ENCODE measurements at regions of chr3 and their contacts with region 1.

Region 1: GRCh38 chr3:138915503-138916498 is 31.1 kb downstream of the FOXL2 start:
- DNase-seq: peak; percentile 88
- H3K4me3 Mint-ChIP-seq: peak overlapping the region; percentile 78
- H3K27ac Mint-ChIP-seq: no peak overlapping the region
- H3K4me1 Mint-ChIP-seq: peaks cover 5% of the 10 kb centered on the region
- H3K27me3 Mint-ChIP-seq: no peaks in the 10 kb centered on the region

Region 2: DNA sequence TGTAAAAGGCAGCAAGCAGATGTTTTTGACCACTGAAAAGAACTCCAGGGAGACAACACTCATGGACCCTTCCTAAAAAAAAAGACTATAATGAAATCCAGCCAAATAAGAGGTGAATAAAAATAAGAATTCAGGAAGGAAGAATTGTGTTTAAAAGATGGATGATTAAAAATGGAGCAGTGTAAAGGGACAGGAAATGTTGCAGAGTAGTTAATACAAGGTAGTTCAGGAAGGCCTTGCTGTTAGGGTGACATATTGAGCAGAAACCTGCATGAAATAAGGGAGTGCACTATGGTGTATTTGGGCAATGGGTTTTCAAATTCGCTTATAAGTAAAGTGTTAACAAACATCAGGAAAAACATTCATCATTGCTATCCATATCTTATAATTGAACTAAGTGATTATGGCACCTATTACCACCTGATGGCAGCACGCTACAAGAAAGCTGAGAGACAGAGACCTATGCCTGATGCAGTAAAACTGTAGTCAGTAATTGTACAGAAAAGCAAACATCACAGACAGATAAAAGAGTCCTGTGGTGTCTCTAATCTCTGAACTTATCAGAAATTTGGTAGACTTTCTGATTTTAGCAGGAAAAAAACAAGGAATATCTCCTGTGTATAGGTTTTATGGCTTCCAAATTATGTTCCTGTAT is 735.3 kb before region 1 on chr3:
- CTCF ChIA-PET with region 1: interaction called, 13 read pairs
- POLR2A ChIA-PET with region 1: no interaction called
- intact Hi-C with region 1: loop called (anchors 5 kb)
- DNase-seq: peak; percentile 49
- H3K4me3 Mint-ChIP-seq: no peak overlapping the region
- H3K27ac Mint-ChIP-seq: no peak overlapping the region
- H3K4me1 Mint-ChIP-seq: peaks cover 5% of the 10 kb centered on the region
- H3K27me3 Mint-ChIP-seq: peaks cover 6% of the 10 kb centered on the region

Region 3: DNA sequence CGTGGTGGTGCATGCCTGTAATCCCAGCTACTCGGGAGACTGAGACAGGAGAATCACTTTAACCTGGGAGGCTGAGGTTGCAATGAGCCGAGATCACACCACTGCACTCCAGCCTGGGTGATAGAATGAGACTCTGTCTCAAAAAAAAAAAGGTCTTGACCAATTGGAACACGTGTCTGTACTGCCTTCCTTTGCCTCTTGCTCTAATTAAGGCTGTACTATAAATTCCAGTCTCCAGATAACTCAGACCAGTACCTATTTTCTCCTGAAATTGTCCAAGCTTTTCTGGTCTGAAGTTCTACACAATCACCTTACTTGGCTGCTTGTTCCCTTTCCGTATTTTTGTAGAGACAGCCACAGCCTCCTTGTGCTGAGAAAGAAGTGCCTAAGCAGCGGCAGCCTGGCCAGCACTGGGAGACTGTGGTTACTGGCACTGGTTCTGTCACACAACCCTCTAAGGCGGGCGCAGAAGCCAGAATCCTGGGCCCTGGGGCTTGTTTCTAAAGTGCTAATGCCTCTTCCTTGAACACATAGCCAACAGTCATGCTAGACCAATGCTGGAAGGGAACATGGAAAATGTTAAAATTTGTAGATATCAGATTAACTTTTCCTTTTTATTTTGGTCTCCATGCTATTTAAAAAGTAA is 315.6 kb before region 1 on chr3:
- CTCF ChIA-PET with region 1: interaction called, 232 read pairs
- POLR2A ChIA-PET with region 1: interaction called, 7 read pairs
- intact Hi-C with region 1: no loop called
- DNase-seq: no peak
- H3K4me3 Mint-ChIP-seq: no peak overlapping the region
- H3K27ac Mint-ChIP-seq: no peak overlapping the region
- H3K4me1 Mint-ChIP-seq: no peaks in the 10 kb centered on the region
- H3K27me3 Mint-ChIP-seq: no peaks in the 10 kb centered on the region

Region 4: DNA sequence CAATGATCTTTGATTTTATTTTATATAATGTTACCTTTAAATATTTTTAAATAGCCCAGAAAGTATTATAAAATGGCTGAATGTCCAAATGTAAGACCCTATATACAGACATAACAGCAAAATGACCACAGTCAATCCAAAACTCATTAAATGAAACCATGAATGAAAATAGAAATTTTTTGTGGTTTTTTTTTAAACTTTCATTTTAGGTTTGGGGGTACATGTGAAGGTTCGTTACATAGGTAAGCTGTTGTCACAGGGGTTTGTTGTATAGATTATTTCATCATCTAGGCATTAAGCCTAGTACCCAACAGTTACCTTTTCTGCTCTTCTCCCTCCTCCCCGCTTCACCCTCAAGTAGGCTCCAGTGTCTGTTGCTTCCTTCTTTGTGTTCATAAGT is 198.5 kb before region 1 on chr3:
- CTCF ChIA-PET with region 1: interaction called, 32 read pairs
- POLR2A ChIA-PET with region 1: no interaction called
- intact Hi-C with region 1: no loop called
- DNase-seq: no peak
- H3K4me3 Mint-ChIP-seq: no peak overlapping the region
- H3K27ac Mint-ChIP-seq: no peak overlapping the region
- H3K4me1 Mint-ChIP-seq: peaks cover 12% of the 10 kb centered on the region
- H3K27me3 Mint-ChIP-seq: no peaks in the 10 kb centered on the region

Region 5: DNA sequence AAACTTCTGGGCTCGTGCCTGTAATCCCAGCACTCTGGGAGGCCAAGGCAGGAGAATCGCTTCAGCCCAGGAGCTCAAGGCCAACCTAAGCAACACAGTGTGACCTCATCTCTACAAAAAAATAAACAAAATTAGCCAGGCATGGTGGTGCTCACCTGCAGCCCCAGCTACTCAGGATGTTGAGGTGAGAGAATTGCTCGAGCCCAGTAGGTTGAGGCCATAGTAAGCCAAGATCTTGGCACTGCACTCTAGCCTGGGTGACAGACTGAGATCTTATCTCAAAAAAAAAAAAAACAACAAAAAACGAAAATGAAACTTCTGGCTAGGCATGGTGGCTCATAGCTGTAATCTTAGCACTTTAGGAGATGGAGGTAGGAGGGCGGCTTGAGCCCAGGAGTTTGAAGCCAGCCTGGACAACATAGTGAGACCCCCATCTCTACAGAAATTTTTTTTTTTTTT is 134.8 kb before region 1 on chr3:
- CTCF ChIA-PET with region 1: interaction called, 14 read pairs
- POLR2A ChIA-PET with region 1: no interaction called
- intact Hi-C with region 1: no loop called
- DNase-seq: peak; percentile 58
- H3K4me3 Mint-ChIP-seq: no peak overlapping the region
- H3K27ac Mint-ChIP-seq: peak overlapping the region; percentile 28
- H3K4me1 Mint-ChIP-seq: peaks cover 25% of the 10 kb centered on the region
- H3K27me3 Mint-ChIP-seq: no peaks in the 10 kb centered on the region

Region 6: DNA sequence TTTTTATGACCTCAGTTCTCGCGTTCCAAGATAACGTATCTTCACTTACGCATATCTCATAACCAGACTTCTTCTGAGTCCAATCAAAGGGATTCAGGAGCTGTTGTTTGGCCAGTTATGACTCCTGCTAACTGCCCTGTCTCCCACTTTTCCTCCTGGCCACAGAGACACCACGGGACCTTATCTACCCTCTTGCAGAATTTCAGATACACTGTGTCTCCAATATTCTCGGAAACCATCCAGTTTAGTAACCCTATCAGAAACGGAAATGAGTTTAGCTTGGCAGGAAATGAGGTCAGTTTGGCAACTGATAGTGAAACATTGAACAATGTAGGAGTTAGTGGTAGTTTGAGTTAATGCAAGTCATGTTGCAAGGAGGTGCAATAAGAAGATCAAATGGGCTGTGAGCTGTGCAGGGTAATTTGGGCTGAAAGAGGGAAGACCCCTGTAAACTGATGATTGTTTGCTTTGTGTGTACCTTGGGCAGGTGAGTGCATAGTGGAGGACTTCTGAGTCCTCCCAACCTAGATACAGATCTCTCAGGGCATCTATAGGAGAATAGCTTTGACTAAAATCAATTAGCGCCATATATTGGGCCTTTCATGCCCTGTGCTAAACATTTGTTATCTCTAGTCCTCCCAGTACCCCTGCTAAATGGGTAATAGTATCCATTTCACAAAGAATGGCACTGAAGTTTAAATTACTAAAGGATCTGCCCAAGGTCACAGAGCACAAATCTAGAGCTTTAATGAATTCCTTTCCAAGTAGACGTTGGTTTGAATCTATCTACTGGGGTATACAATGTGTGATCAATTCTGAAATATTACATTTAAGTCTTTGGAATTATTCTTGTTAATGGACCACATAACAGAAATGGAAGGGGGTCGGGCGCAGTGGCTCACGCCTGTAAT is 39.8 kb before region 1 on chr3:
- CTCF ChIA-PET with region 1: interaction called, 10 read pairs
- POLR2A ChIA-PET with region 1: no interaction called
- intact Hi-C with region 1: no loop called
- DNase-seq: peak; percentile 9
- H3K4me3 Mint-ChIP-seq: no peak overlapping the region
- H3K27ac Mint-ChIP-seq: peak overlapping the region; percentile 0
- H3K4me1 Mint-ChIP-seq: peaks cover 11% of the 10 kb centered on the region
- H3K27me3 Mint-ChIP-seq: no peaks in the 10 kb centered on the region

Region 7: GRCh38 chr3:139101396-139101795 is 185.6 kb after region 1 on chr3:
- CTCF ChIA-PET with region 1: no interaction called
- POLR2A ChIA-PET with region 1: no interaction called
- intact Hi-C with region 1: no loop called
- DNase-seq: no peak
- H3K4me3 Mint-ChIP-seq: no peak overlapping the region
- H3K27ac Mint-ChIP-seq: no peak overlapping the region
- H3K4me1 Mint-ChIP-seq: no peaks in the 10 kb centered on the region
- H3K27me3 Mint-ChIP-seq: no peaks in the 10 kb centered on the region

Region 8: DNA sequence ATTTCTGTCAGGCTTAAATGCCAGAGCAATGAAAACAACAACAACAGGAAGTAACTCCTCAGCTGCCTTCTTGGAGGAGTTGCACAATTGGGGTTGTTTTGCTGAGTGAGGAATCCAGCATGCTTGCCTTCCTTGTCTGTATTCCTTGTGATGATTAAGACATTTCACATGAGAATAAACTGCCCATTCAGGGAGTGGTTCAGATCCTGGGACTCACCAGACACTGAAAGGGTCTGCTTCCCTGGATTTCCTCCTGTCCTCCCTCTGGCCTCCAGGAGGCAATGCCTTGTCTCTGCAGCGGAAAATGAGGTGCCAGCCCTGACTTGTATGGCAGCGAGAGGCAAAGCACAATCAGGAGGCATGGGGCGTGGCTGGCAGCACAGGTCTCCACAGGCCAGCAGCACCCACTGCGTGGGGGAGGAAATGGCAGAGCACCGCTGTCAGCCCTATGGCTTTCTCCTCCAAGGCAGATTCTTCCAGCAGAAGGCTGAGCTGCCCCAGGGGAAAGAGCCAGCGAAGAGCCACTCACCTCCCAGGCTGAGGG is 519.0 kb after region 1 on chr3:
- CTCF ChIA-PET with region 1: no interaction called
- POLR2A ChIA-PET with region 1: no interaction called
- intact Hi-C with region 1: no loop called
- DNase-seq: no peak
- H3K4me3 Mint-ChIP-seq: no peak overlapping the region
- H3K27ac Mint-ChIP-seq: no peak overlapping the region
- H3K4me1 Mint-ChIP-seq: no peaks in the 10 kb centered on the region
- H3K27me3 Mint-ChIP-seq: no peaks in the 10 kb centered on the region

Region 9: GRCh38 chr3:139893267-139893962 is 977.6 kb after region 1 on chr3:
- CTCF ChIA-PET with region 1: no interaction called
- POLR2A ChIA-PET with region 1: no interaction called
- intact Hi-C with region 1: no loop called
- DNase-seq: no peak
- H3K4me3 Mint-ChIP-seq: no peak overlapping the region
- H3K27ac Mint-ChIP-seq: no peak overlapping the region
- H3K4me1 Mint-ChIP-seq: no peaks in the 10 kb centered on the region
- H3K27me3 Mint-ChIP-seq: no peaks in the 10 kb centered on the region